ENCODE measurements at regions of chr15 and their contacts with region 1.

Region 1: DNA sequence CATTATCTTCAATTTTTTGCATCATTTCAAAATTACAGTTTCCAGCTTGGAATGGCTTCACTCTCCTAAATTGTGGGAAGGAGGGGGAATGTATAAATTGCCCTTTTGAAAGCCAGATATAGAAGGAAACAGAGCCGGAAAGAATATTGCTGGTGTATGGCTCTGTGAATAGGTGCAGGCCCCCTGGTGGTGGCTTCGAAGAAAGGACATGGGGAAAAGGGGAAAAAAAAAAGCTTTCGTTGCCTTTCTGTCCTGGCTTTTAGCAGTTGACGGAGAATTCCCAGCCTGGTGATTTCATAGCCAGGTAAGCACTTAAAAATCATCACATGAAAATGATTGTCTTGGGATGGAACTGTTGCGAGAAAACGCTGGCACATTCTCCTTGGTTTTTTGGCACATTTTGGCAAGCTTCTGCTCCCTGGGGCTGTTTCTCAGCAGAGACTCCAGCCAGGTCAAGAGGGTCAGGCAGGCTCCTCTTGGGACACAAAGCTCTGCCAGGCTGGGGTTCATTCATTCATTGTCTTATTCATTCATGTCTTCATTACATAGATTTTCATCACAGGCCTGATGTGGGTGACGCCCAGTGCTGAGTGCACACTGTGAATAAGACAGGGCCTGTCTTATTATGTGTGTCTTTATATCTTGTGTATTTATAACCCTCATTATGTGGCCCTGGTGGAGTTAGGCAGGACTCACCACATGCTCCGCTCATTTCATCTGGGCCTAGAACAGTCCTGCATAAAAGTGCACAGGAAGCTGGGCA is 300.0 kb upstream of the TPM1 start:
- DNase-seq: peak; percentile 48
- H3K4me3 Mint-ChIP-seq: no peak overlapping the region
- H3K27ac Mint-ChIP-seq: no peak overlapping the region
- H3K4me1 Mint-ChIP-seq: no peaks in the 10 kb centered on the region
- H3K27me3 Mint-ChIP-seq: peaks cover 4% of the 10 kb centered on the region

Region 2: GRCh38 chr15:62389885-62390790 is 352.5 kb before region 1 on chr15:
- CTCF ChIA-PET with region 1: interaction called, 10 read pairs
- intact Hi-C with region 1: loop called (anchors 2 kb)
- DNase-seq: peak; percentile 63
- H3K4me3 Mint-ChIP-seq: peak within 1 kb of the TSS; percentile 85
- H3K27ac Mint-ChIP-seq: peak within 1 kb of the TSS; percentile 46
- H3K4me1 Mint-ChIP-seq: peaks cover 12% of the 10 kb centered on the region
- H3K27me3 Mint-ChIP-seq: peaks cover 19% of the 10 kb centered on the region

Region 3: GRCh38 chr15:62732078-62732477 is 10.5 kb before region 1 on chr15:
- CTCF ChIA-PET with region 1: interaction called, 10 read pairs
- intact Hi-C with region 1: no loop called
- DNase-seq: no peak
- H3K4me3 Mint-ChIP-seq: no peak overlapping the region
- H3K27ac Mint-ChIP-seq: no peak overlapping the region
- H3K4me1 Mint-ChIP-seq: no peaks in the 10 kb centered on the region
- H3K27me3 Mint-ChIP-seq: peaks cover 12% of the 10 kb centered on the region

Region 4: DNA sequence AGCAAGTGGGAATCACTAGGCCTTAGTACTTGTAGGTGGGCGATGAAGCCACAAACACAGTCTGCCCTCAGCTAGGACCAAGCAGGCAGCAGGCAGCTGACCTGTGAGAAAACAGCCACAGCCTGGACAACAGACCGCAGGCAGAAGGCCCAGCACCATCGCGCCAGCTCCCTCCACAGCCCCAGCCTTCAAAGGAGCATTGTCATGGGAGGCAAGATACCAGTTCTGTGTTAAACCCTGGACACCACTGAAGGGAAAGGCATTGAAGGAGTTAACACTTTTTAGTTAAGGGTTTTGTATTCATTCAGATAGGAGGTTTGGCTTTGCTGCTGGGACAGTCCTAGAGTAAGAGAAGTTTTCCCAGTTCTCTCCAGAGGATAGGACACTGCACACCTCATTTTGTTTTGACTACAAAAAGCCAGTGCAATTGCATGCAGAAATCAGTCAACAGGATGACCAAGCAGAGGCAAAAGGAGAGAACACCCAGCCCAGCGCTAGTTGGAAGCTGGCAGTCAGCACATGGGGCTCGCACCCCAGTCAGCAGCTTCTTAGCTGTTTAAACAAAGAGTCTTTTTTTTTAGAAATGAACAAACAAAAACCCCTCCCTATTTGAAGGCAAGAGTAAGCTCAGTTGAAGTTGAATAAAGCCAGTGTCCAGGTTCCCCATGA is 13.9 kb after region 1 on chr15:
- CTCF ChIA-PET with region 1: interaction called, 15 read pairs
- intact Hi-C with region 1: no loop called
- DNase-seq: no peak
- H3K4me3 Mint-ChIP-seq: no peak overlapping the region
- H3K27ac Mint-ChIP-seq: no peak overlapping the region
- H3K4me1 Mint-ChIP-seq: no peaks in the 10 kb centered on the region
- H3K27me3 Mint-ChIP-seq: peaks cover 3% of the 10 kb centered on the region